Testis (tissue), 5 donors: ENCODE measurements at regions of chr16 and their contacts with region 1.

Region 1: DNA sequence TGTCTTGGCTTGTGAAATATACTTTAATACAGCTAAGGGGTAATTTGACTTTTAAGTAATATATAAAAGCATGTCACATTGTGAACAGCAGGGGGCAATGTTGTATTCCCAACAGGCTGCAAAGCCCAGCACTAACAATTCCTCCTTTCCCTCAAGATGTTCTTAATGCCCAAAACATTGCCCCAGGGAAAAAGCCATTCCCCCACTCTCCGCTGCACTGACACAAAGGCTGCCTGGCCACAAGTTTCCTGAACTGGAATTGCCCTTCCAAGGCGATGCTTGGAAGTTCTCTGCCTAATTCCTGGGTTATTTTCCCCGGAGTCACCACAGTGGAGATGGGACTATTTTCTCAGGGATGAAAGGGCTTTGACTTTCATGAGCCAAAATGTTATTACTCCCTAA is 27.2 kb downstream of the CLEC16A start:
- DNase-seq: peak; percentile 69
- H3K4me3 ChIP-seq: no peak overlapping the region
- H3K27ac ChIP-seq: no peak overlapping the region
- H3K4me1 ChIP-seq: peaks cover 12% of the 10 kb centered on the region
- H3K27me3 ChIP-seq: no peaks in the 10 kb centered on the region
- CTCF ChIP-seq: peak; percentile 86 to 90 (median 89)
- POLR2A ChIP-seq: no peak

Region 2: GRCh38 chr16:11100239-11100750 is 128.7 kb after region 1 on chr16:
- intact Hi-C with region 1: no loop called
- DNase-seq: peak; percentile 51
- H3K4me3 ChIP-seq: no peak overlapping the region
- H3K27ac ChIP-seq: no peak overlapping the region
- H3K4me1 ChIP-seq: peaks cover 16% of the 10 kb centered on the region
- H3K27me3 ChIP-seq: no peaks in the 10 kb centered on the region
- CTCF ChIP-seq: no peak
- POLR2A ChIP-seq: no peak

Region 3: DNA sequence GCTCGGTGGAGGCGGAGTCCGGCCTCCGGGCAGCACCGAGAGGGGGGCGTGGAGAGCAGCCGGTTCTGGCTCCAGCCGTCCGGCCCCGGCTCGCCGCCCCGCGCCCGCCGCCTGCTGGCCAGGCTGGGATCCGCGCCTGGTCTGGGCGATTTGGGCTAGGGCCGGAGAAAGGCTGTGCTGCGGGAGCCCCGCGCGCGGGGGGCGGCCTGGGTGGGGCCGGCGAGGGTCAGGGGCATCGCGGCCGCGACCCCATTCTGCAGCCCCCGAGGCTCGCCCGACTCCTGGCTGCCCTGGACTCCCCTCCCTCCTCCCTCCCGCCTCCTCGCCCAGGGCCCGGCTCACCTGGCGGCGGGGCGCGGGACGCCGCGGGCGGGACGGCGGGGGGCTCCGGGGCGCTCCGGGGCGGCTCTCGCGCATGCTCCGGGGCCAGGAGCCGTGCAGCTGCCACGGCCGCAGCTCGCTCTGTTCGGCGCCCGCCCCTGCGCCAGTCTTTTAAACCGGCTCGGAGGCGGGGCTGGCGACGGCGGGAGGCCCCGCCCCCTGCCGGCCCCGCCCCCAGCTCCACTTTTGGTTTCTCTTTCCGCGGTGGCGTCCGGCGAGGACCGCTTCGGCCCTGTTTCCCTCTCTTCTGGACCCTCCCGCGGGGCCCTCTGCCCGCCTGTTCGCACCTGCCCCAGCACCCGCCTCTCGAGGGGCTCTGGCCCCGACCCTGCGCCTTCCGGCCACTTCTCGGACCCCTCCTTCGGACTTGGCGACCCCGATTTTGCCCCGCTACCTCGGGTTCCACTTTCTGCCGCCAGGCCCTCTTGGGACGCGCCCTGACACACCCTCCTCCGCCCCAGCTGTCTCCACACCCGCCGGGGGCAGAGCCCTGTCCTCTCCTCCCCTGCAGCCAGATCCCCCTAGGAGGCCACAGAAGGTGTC is 284.4 kb after region 1 on chr16 and contains the start of gene SOCS1:
- intact Hi-C with region 1: loop called (anchors 5 kb)
- DNase-seq: peak; percentile 90
- H3K4me3 ChIP-seq: peak within 1 kb of the TSS; percentile 70 to 77
- H3K27ac ChIP-seq: peak within 1 kb of the TSS; percentile 84 to 97
- H3K4me1 ChIP-seq: peaks cover 18% of the 10 kb centered on the region
- H3K27me3 ChIP-seq: no peaks in the 10 kb centered on the region
- CTCF ChIP-seq: peak; percentile 92 to 97 (median 94)
- POLR2A ChIP-seq: peak; percentile 62
- total RNA-seq, gene SOCS1: 10.7 to 16.8 TPM